IMR-90 (cell line): ENCODE measurements at regions of chr11 and their contacts with region 1.

Region 1: GRCh38 chr11:842370-843002 is at the starts of genes POLR2L and TSPAN4:
- DNase-seq: peak; percentile 84
- ATAC-seq: peak; percentile 34
- H3K4me3 ChIP-seq: peak within 1 kb of the TSS; percentile 98
- H3K27ac ChIP-seq: peak within 1 kb of the TSS; percentile 98
- H3K4me1 ChIP-seq: peaks cover 35% of the 10 kb centered on the region
- H3K27me3 ChIP-seq: no peaks in the 10 kb centered on the region
- CTCF ChIP-seq: no peak
- POLR2A ChIP-seq: peak; percentile 97
- RAD21 ChIP-seq: no peak
- total RNA-seq, gene POLR2L: 44.4 and 123 TPM in 2 replicates
- total RNA-seq, gene TSPAN4: 143 and 161 TPM in 2 replicates

Region 2: DNA sequence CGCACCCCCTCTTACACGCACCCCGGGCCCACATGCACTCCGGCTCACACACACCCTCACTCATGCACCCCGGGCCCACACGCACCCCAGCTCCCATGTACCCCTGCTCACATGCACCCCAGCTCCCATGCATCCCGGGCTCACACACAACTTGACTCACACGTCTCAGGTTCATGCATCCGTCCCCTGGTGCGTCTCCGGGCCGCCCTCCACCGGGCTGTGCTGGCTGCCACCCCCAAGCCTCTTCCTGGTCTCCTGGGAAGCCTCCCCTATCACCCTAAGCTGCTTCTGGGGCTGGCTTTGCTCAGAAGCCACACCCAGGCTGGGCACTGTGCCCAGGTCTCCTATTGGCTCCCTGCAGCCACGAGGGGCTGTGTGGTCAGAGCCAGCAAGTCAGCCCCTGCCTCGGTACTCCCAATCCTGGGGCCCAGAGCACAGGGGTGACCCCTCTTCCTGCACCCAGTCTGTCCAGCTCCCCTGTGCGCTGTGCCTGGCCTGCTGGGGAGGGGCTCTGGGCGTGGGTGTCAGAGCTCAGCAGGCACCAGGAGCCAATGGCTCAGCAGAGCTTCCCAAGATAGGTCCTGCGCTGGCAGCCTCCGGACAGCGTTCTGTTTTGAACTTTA is 17.1 kb after region 1 on chr11:
- CTCF ChIA-PET with region 1: no interaction called
- POLR2A ChIA-PET with region 1: interaction called, 12 read pairs
- dilution Hi-C with region 1: no loop called
- in situ Hi-C with region 1: no loop called
- intact Hi-C with region 1: no loop called
- DNase-seq: peak; percentile 85
- ATAC-seq: peak; percentile 87
- H3K4me3 ChIP-seq: peak overlapping the region; percentile 9; the same call in 1 of the 2 replicates
- H3K27ac ChIP-seq: 0 out of 2 replicates have a peak overlapping the region, but pooled peaks have one; percentile 1
- H3K4me1 ChIP-seq: peaks cover 12% of the 10 kb centered on the region
- H3K27me3 ChIP-seq: no peaks in the 10 kb centered on the region
- CTCF ChIP-seq: no peak
- POLR2A ChIP-seq: no peak
- RAD21 ChIP-seq: no peak

Region 3: DNA sequence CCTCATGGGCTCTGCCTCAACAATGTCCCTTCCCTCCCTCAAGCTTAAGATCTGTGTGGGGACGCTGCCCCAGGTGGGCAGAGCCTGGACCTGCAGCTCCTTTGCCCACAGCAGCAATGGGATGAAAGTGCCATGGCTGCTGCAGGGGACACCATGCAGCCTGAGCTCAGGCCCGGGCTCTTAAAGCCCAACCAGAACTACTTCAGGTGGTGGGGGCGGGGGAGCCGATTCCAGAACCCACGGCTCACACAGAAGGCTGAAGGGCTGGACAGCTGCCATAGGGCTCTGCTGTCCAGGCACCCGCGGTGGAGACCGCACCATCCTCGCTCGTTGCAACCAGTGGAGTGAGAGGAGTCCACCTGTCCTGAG is 55.6 kb after region 1 on chr11:
- CTCF ChIA-PET with region 1: no interaction called
- POLR2A ChIA-PET with region 1: no interaction called
- dilution Hi-C with region 1: no loop called
- in situ Hi-C with region 1: no loop called
- intact Hi-C with region 1: no loop called
- DNase-seq: peak; percentile 11
- ATAC-seq: peak; percentile 80
- H3K4me3 ChIP-seq: no peak overlapping the region
- H3K27ac ChIP-seq: no peak overlapping the region
- H3K4me1 ChIP-seq: no peaks in the 10 kb centered on the region
- H3K27me3 ChIP-seq: no peaks in the 10 kb centered on the region
- CTCF ChIP-seq: peak; percentile 29; the same call in 1 of the 2 replicates
- POLR2A ChIP-seq: no peak
- RAD21 ChIP-seq: peak; percentile 43

Region 4: DNA sequence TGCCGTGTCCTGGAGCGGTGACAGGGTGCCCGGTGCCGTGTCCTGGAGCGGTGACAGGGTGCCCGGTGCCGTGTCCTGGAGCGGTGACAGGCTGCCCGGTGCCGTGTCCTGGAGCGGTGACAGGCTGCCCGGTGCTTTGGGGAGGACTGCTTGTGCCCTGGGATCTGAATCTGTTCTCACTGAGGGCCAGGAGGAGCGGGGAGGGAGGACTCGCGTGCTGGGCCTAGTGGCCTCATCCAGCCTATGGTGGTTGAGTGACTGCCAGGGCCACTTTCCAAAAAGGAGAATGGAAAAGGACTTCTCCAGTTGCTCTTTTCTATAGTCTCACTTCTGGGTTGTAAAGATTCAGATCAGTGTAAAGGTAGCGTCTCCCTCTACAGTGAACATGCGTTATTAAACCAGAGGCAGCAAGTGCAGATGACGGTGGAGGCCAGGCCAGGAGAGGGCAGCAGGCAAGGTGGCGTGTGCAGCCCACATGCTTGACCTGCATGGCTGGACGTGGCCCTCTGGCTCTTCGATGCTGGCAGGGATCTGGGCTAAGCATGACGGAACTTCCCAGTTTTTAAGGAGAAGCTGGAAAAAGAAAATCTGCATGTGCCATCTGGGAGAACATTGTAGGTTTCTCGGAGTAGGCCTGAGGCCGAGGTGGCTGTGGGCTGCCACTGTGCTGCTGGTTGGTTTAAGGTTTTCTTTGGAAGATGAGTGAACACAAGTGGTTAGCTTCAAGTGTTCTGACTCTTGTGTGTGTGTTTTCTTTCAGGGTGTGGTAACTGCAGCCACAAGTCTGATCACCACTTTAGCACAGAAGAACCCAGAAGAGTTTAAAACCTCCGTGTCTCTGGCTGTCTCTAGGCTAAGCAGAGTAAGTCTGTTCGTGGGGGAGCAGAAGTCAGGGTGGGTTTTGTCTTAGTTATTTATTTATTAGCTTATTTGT is 138.2 kb after region 1 on chr11:
- CTCF ChIA-PET with region 1: no interaction called
- POLR2A ChIA-PET with region 1: no interaction called
- dilution Hi-C with region 1: no loop called
- in situ Hi-C with region 1: no loop called
- intact Hi-C with region 1: no loop called
- DNase-seq: no peak
- ATAC-seq: no peak
- H3K4me3 ChIP-seq: no peak overlapping the region
- H3K27ac ChIP-seq: no peak overlapping the region
- H3K4me1 ChIP-seq: no peaks in the 10 kb centered on the region
- H3K27me3 ChIP-seq: no peaks in the 10 kb centered on the region
- CTCF ChIP-seq: no peak
- POLR2A ChIP-seq: no peak
- RAD21 ChIP-seq: no peak

Region 5: DNA sequence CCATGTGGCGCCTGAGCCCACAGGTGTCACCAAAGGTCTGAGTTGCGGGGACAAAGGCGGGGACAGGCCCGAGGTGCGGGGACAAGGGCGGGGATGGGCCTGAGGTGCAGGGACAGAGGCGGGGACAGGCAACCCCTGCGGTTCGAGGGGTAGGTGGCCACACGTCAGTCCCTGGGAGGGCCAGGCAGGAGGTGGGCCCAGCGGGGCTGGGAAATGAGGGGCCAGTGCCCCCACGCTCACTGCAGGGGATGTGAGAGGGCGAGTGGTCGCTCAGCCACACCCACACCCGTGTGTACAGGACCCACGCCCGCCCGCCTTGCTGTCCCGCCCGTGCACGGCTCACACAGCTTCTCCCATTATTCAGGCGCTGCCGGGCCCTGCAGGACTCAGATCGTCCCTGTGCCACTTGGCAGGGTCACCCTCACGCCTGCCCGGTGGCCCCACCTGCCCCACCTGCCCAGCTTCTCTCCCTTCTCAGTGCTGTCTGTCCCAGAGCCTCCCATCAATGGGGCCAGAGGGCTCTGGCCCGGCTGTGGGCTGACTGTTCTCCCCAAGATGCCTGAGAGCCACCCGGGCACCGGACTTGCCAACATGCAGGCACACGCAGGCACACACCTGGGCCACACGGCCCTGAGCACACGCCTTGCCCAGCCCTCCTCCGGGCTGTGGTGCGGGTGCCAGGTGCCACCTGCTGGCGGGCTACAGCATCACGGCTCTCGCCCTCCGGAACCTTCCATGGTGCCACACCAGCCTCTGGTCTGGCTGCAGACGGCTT is 208.3 kb after region 1 on chr11:
- CTCF ChIA-PET with region 1: no interaction called
- POLR2A ChIA-PET with region 1: no interaction called
- dilution Hi-C with region 1: no loop called
- in situ Hi-C with region 1: no loop called
- intact Hi-C with region 1: loop called (anchors 10 kb)
- DNase-seq: peak; percentile 18
- ATAC-seq: peak; percentile 84
- H3K4me3 ChIP-seq: no peak overlapping the region
- H3K27ac ChIP-seq: no peak overlapping the region
- H3K4me1 ChIP-seq: no peaks in the 10 kb centered on the region; the same call in 1 of the 2 replicates
- H3K27me3 ChIP-seq: peaks cover 27% of the 10 kb centered on the region
- CTCF ChIP-seq: peak; percentile 65
- POLR2A ChIP-seq: no peak
- RAD21 ChIP-seq: peak; percentile 76